K562 (cell line): ENCODE measurements at regions of chr6 and their contacts with region 1.

Region 1: GRCh38 chr6:109073344-109074132 is 21.1 kb downstream of the SESN1 start:
- DNase-seq: peak; percentile 27 to 77 (median 42)
- ATAC-seq: peak; percentile 76
- H3K4me3 ChIP-seq: no peak overlapping the region
- H3K27ac ChIP-seq: no peak overlapping the region
- H3K4me1 ChIP-seq: no peaks in the 10 kb centered on the region; a peak in 1 of 5 replicates
- H3K27me3 ChIP-seq: no peaks in the 10 kb centered on the region
- CTCF ChIP-seq: peak; percentile 64 to 81 (median 68); a peak in 5 of 6 replicates
- EP300 ChIP-seq: no peak
- POLR2A ChIP-seq: no peak
- RAD21 ChIP-seq: peak; percentile 87 to 92

Region 2: DNA sequence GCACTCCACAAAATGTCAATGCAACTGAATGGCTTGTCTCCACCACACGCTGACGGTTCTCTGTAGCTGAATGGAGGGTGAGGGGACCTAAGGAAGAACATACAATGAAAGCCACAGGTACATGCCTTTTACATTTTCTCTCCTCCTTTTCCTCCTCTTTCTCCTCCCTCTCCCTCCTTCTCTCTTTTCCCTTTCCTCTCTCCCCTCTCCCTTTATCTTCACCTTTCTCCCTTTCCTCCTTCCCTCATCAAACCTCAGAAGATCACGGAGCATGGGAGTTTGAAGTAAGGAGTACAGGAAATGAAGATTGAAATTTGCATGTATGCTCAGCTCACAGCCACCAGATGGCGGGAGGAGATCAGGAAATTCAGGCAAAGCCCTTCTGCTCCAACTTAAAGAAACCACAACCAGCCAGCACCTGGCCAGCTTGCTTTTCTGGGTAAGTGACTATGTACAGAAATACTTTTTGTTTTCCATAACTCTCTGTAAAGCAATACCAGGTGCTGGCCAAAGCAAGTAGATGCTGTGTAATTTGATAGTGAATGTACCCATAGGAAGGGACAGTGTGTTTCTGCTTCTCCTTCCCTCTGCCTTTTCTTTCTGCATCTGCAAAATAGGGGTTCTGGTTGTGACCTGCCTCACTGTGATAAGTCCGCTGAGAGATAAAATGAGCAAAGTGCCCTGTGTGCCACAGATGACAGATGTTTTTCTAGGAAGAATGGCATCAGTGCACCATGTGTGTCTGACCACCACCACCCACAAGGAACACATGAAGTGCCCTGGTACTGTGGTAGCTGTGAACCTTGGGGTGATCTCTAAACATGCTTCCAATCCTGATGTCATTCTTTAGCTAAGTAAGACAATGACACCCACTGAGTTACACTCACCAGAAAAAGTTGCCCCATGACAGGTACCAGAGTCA is 531.4 kb before region 1 on chr6:
- CTCF ChIA-PET with region 1: interaction called, 31 read pairs
- POLR2A ChIA-PET with region 1: no interaction called
- in situ Hi-C with region 1: loop called (anchors 5 kb)
- intact Hi-C with region 1: loop called (anchors 1 kb)
- DNase-seq: peak; percentile 64 to 81 (median 64)
- ATAC-seq: peak; percentile 94
- H3K4me3 ChIP-seq: no peak overlapping the region
- H3K27ac ChIP-seq: no peak overlapping the region
- H3K4me1 ChIP-seq: no peaks in the 10 kb centered on the region
- H3K27me3 ChIP-seq: 0 out of 5 replicates have a peak, but pooled peaks cover 0 to 4% of the 10 kb centered on the region in 2 experiments
- CTCF ChIP-seq: peak; percentile 83 to 96 (median 87)
- EP300 ChIP-seq: no peak
- POLR2A ChIP-seq: no peak
- RAD21 ChIP-seq: peak; percentile 98 to 99

Region 3: DNA sequence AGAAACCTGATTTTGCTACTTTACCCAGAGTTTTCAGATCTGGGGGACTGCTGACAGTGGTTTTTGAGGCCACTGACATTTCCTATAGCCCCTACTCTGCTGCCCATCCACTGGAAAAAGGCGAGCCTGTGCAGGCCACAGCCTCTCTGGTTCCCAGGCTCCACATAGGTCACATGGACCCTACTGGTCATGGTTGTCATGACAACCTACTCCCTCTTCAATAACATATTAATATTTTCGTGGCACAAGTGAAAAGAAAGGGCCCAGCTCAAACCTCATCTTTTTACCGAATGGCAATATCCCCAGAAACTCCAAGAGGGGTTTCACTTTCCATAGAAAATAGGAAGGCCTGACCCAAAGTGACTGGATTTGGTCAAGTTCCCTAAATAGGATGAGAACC is 523.8 kb before region 1 on chr6:
- CTCF ChIA-PET with region 1: no interaction called
- POLR2A ChIA-PET with region 1: no interaction called
- in situ Hi-C with region 1: loop called (anchors 5 kb)
- intact Hi-C with region 1: no loop called
- DNase-seq: peak in 2 of 4 experiments; percentile 59 to 66
- ATAC-seq: 0 out of 3 replicates have a peak, but pooled peaks have one; percentile 32
- H3K4me3 ChIP-seq: no peak overlapping the region
- H3K27ac ChIP-seq: no peak overlapping the region
- H3K4me1 ChIP-seq: no peaks in the 10 kb centered on the region
- H3K27me3 ChIP-seq: no peaks in the 10 kb centered on the region
- CTCF ChIP-seq: no peak
- EP300 ChIP-seq: no peak
- POLR2A ChIP-seq: no peak
- RAD21 ChIP-seq: no peak

Region 4: DNA sequence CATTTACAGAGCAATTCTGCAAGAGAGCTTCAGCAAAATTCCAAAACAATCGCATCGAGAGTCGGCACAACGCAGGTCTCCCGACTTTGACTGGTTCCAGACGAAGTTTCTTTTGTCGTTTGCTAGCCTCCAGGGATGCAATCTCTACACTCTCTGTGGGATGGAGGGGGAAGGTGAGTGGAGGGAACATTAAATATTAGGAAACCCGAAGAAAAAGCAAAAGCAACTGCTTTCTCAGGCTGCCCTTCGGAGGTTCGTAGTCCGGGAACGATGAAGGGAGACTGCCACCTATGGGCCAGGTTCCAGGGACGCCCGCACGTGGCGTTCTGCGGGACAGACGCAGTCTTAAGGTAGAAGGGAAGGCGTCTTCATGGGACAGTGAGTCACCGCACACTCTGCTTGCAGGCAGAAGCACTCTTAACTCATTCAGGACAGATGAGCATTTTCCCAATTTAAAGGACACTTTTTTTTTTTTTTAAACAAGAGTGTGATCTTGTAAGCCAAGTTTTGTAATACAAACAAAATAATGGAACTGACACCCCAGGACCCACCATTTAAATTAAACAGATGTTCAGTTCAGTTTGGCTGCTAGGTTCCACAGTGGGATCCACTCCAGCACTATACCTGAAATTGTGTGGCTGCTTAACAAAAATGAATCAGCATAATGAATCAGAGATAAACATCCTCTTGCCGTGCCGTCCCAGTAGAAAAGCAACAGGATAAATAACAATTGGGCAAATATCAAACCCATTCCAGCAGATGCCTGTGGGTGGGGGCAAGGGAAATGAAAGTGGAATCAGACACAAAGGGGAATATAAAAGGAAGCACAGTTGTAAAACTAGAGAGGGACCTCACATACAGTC is 291.1 kb before region 1 on chr6:
- CTCF ChIA-PET with region 1: no interaction called
- POLR2A ChIA-PET with region 1: no interaction called
- in situ Hi-C with region 1: no loop called
- intact Hi-C with region 1: loop called (anchors 5 kb)
- DNase-seq: peak; percentile 68 to 89 (median 79)
- ATAC-seq: peak; percentile 99
- H3K4me3 ChIP-seq: no peak overlapping the region
- H3K27ac ChIP-seq: no peak overlapping the region
- H3K4me1 ChIP-seq: peaks cover 0 to 9% of the 10 kb centered on the region in 2 experiments; a peak in 2 of 5 replicates
- H3K27me3 ChIP-seq: peaks cover 16 to 28% of the 10 kb centered on the region in 2 experiments
- CTCF ChIP-seq: peak; percentile 92 to 94 (median 93)
- EP300 ChIP-seq: 0 out of 2 replicates have a peak, but pooled peaks have one; percentile 8
- POLR2A ChIP-seq: no peak
- RAD21 ChIP-seq: peak; percentile 92 to 95

Region 5: DNA sequence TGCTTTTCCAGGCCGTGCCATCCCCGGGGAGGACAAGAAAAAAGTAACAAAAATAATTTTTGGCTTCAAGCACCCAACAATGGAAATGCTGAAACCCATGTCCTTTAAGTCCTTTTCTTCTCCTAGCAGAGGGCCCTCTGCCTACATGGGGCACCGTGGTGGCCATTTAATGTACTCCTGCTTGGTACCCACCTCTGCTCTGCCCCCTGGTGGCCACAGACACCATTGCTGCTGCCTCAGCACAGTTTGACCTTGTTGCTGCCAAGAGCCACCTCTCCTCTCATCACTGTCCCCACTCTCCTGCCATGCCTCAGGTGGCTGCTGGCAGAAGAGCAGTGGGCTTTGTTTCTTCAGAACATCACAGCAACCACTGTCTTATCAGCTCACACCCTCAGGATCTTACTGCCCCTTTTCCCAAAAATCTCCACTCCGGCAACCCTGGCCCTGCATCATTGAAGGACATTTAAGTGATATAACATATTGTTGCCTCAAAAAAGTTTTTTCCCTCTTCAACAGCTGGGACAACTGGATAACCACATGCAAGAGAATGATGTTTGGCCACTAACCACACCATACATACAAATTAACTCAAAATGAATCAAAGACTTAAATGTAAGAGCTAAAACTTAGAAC is 238.2 kb before region 1 on chr6:
- CTCF ChIA-PET with region 1: no interaction called
- POLR2A ChIA-PET with region 1: interaction called, 3 read pairs
- in situ Hi-C with region 1: no loop called
- intact Hi-C with region 1: loop called (anchors 5 kb)
- DNase-seq: peak; percentile 76 to 83 (median 78)
- ATAC-seq: peak; percentile 98
- H3K4me3 ChIP-seq: no peak overlapping the region
- H3K27ac ChIP-seq: no peak overlapping the region
- H3K4me1 ChIP-seq: peaks cover 0 to 9% of the 10 kb centered on the region in 2 experiments; a peak in 4 of 5 replicates
- H3K27me3 ChIP-seq: peaks cover 19 to 40% of the 10 kb centered on the region in 2 experiments; a peak in 4 of 5 replicates
- CTCF ChIP-seq: peak; percentile 82 to 87 (median 86)
- EP300 ChIP-seq: no peak
- POLR2A ChIP-seq: no peak
- RAD21 ChIP-seq: peak; percentile 76 to 87

Region 6: GRCh38 chr6:108848116-108848868 is 225.2 kb before region 1 on chr6 and contains the start of gene ARMC2:
- CTCF ChIA-PET with region 1: no interaction called
- POLR2A ChIA-PET with region 1: no interaction called
- in situ Hi-C with region 1: no loop called
- intact Hi-C with region 1: no loop called
- DNase-seq: peak; percentile 94 to 98 (median 97)
- ATAC-seq: peak; percentile 100
- H3K4me3 ChIP-seq: peak within 1 kb of the TSS; percentile 64
- H3K27ac ChIP-seq: peak within 1 kb of the TSS; percentile 29; the same call in 1 of the 3 replicates
- H3K4me1 ChIP-seq: peaks cover 5 to 9% of the 10 kb centered on the region in 2 experiments; a peak in 4 of 5 replicates
- H3K27me3 ChIP-seq: 0 out of 5 replicates have a peak, but pooled peaks cover 0 to 5% of the 10 kb centered on the region in 2 experiments
- CTCF ChIP-seq: no peak
- EP300 ChIP-seq: no peak
- POLR2A ChIP-seq: peak; percentile 67
- RAD21 ChIP-seq: no peak
- polyA plus RNA-seq, gene ARMC2: 0.39 to 0.71 TPM

Region 7: GRCh38 chr6:108896111-108896661 is 177.4 kb before region 1 on chr6:
- CTCF ChIA-PET with region 1: no interaction called
- POLR2A ChIA-PET with region 1: no interaction called
- in situ Hi-C with region 1: loop called (anchors 25 kb)
- intact Hi-C with region 1: loop called (anchors 5 kb)
- DNase-seq: no peak
- ATAC-seq: no peak
- H3K4me3 ChIP-seq: no peak overlapping the region
- H3K27ac ChIP-seq: no peak overlapping the region
- H3K4me1 ChIP-seq: no peaks in the 10 kb centered on the region
- H3K27me3 ChIP-seq: peaks cover 6 to 9% of the 10 kb centered on the region in 2 experiments; a peak in 3 of 5 replicates
- CTCF ChIP-seq: no peak
- EP300 ChIP-seq: no peak
- POLR2A ChIP-seq: no peak
- RAD21 ChIP-seq: no peak

Region 8: DNA sequence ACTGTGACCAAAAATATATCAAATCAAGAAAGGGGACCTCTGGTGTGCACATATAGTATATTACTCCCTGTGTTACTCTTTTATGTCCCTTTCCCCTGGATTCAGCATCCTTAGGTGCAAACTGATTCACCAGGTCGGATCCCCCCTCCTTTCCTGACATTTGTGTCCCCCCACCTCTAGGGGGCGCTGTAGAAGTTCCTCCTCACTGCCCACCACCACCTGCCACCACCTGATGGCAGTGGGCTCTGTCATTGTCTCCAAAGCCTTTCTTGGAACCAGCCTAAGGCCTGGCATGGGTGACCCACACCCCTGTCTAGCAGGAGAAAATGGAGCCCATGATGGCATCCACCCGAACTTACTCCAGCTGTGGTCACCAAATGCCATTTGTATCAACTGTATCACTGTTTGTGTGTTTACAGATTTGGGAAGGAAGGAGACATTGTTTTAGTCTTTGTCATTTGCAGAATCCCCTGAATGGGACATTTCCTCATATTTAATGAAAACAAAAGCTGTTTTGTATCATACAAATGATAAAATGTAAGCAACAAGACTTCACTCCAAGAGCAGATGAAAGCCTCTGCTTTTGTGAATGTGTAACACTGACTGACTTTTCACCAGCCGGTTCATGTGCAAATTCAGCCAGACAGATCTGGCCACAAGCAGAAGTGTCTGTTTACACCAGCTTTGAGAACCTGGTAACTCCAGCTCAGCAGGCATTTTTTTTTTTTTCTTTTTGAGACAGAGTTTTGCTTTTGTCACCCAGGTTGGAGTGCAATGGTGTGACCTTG is 159.1 kb before region 1 on chr6:
- CTCF ChIA-PET with region 1: interaction called, 15 read pairs
- POLR2A ChIA-PET with region 1: no interaction called
- in situ Hi-C with region 1: loop called (anchors 25 kb)
- intact Hi-C with region 1: loop called (anchors 2 kb)
- DNase-seq: peak; percentile 72 to 80 (median 74)
- ATAC-seq: peak; percentile 93
- H3K4me3 ChIP-seq: no peak overlapping the region
- H3K27ac ChIP-seq: no peak overlapping the region
- H3K4me1 ChIP-seq: no peaks in the 10 kb centered on the region
- H3K27me3 ChIP-seq: peaks cover 14 to 21% of the 10 kb centered on the region in 2 experiments; a peak in 3 of 5 replicates
- CTCF ChIP-seq: peak; percentile 96 to 99 (median 98)
- EP300 ChIP-seq: no peak
- POLR2A ChIP-seq: no peak
- RAD21 ChIP-seq: peak; percentile 39 to 79; a peak in 3 of 4 replicates

Region 9: DNA sequence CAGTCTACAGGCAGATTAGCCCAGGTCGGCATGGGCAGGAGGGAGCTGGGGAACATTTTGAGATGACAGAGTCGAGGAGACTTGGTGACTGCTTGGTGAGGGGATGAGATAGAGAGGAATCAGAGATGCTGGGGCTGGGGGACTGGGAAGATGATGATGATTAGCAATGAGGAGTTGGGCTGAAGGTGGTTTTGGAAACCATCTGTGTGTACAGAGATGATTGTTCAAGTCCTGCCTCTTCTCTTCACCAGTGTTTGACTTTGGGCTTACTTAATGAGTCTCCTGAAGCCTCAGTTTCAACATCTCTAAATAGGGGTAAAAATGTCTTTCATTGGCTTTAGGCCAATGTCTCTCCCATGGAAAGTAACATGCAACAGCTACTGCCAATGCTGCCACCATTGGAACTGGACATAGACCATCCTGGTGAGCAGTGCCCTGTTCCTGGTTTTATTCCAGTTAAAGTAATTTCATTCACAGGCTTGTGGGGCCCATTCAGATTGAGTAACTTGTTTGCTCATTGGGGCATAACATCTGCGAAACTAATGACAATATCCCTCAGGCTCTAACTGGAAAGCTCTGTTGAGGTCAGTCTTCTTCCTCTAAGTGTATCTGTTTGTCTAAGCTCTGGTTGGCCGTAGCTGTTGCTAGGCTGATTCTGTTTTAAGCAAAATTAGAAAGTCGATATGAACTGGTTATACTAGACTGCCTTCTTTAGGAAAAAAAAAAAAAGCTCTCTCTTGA is 126.3 kb before region 1 on chr6:
- CTCF ChIA-PET with region 1: no interaction called
- POLR2A ChIA-PET with region 1: no interaction called
- in situ Hi-C with region 1: no loop called
- intact Hi-C with region 1: no loop called
- DNase-seq: no peak
- ATAC-seq: no peak
- H3K4me3 ChIP-seq: no peak overlapping the region
- H3K27ac ChIP-seq: no peak overlapping the region
- H3K4me1 ChIP-seq: no peaks in the 10 kb centered on the region; a peak in 1 of 5 replicates
- H3K27me3 ChIP-seq: peaks cover 18 to 44% of the 10 kb centered on the region in 2 experiments; a peak in 4 of 5 replicates
- CTCF ChIP-seq: no peak
- EP300 ChIP-seq: no peak
- POLR2A ChIP-seq: no peak
- RAD21 ChIP-seq: no peak